GM12878 (cell line): ENCODE measurements at regions of chr3 and their contacts with region 1.

Region 1: DNA sequence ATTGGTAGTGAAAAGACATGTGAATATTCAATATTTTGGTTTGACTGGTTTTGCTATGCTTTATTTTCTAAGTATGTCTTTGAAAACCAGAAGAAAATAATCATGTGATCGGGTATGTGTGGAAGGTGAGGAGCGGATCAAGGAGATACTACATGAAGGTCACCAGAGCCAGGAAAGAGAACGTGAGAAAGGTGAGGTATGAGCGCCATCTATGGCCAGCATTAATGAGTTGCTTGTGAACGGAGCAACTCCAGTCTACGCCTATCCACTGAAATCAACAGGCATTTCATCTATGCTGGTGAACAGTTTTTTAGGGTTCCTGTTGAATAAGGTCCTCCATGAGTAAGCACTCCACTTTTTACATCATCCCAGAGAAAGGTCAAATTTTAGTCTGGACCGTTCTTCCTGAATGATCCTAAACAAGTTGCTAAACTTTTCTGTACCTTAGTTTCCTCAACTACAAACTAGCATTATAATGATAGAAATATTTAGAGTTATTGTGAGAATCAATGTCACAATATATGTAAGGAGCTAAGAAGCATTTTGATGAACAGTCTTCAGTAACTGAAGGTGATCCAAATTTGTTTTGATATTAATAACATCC is 1435.2 kb upstream of the CADM2 start:
- DNase-seq: peak; percentile 11
- ATAC-seq: peak; percentile 98
- H3K4me3 ChIP-seq: no peak overlapping the region
- H3K27ac ChIP-seq: no peak overlapping the region
- H3K4me1 ChIP-seq: no peaks in the 10 kb centered on the region
- H3K27me3 ChIP-seq: no peaks in the 10 kb centered on the region
- CTCF ChIP-seq: peak; percentile 56 to 78 (median 65)
- EP300 ChIP-seq: no peak
- POLR2A ChIP-seq: no peak
- RAD21 ChIP-seq: peak; percentile 79

Region 2: GRCh38 chr3:81581966-81582599 is 1941.5 kb before region 1 on chr3:
- CTCF ChIA-PET with region 1: no interaction called
- POLR2A ChIA-PET with region 1: no interaction called
- RAD21 ChIA-PET with region 1: no interaction called
- SMC1A ChIA-PET with region 1: no interaction called
- in situ Hi-C with region 1: no loop called
- intact Hi-C with region 1: loop called (anchors 5 kb)
- DNase-seq: peak; percentile 4
- ATAC-seq: peak; percentile 91
- H3K4me3 ChIP-seq: no peak overlapping the region
- H3K27ac ChIP-seq: no peak overlapping the region
- H3K4me1 ChIP-seq: no peaks in the 10 kb centered on the region
- H3K27me3 ChIP-seq: no peaks in the 10 kb centered on the region
- CTCF ChIP-seq: peak; percentile 67 to 76 (median 75)
- EP300 ChIP-seq: no peak
- POLR2A ChIP-seq: no peak
- RAD21 ChIP-seq: peak; percentile 77

Region 3: DNA sequence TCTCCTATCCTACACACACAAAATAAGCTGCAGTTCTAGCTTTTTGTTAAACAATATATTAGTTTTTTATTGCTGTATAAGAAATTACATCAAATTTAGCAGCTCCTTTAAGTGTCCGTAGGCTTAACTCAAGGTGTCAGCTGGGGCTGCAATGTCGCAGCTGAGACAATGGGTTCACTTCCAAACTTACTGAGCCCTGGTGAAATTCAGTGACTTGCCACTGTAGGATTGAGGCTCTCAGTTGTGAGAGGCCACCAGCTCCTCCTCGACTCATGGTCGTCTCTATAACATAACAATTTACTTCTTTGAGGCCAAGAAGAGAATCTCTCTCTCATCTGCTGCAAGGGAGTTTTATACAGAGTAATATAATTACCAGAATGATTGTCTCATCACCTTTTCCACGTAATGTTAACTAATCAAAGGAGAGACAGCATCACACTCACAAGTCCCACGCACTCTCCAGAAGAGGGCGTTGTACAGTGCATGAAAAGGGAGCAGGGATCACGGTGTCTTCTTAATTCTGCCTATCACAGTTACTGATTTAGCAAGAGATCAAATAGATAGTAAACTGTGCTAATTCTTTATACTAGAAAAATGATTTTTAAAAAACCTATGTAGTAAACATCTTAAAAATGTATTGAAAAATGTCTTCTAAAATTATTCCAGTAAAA is 1026.5 kb before region 1 on chr3:
- CTCF ChIA-PET with region 1: interaction called, 3 read pairs
- POLR2A ChIA-PET with region 1: no interaction called
- RAD21 ChIA-PET with region 1: no interaction called
- SMC1A ChIA-PET with region 1: no interaction called
- in situ Hi-C with region 1: no loop called
- intact Hi-C with region 1: loop called (anchors 10 kb)
- DNase-seq: no peak
- ATAC-seq: peak; percentile 63
- H3K4me3 ChIP-seq: no peak overlapping the region
- H3K27ac ChIP-seq: no peak overlapping the region
- H3K4me1 ChIP-seq: no peaks in the 10 kb centered on the region
- H3K27me3 ChIP-seq: no peaks in the 10 kb centered on the region
- CTCF ChIP-seq: peak; percentile 20 to 38 (median 36); a peak in 4 of 6 replicates
- EP300 ChIP-seq: no peak
- POLR2A ChIP-seq: no peak
- RAD21 ChIP-seq: peak; percentile 49

Region 4: DNA sequence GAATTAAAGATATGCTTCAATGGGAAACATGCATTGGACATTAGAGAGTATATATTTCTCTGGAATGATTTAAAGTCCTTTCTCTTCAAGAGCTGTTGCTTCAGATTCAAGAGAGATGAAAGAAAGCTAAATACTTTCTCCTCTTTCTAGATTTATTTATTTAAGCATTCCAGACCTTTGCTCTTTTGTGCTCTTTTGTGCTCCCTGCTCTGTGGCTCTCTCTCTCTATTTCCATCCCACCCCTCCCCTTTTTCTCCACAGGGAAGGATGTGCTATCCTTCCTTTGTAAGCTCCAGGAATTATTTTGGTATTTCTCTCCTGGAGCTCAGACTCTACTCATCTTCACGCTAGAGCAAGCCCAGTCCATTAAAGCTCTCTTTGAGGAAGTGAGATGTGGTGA is 890.3 kb before region 1 on chr3:
- CTCF ChIA-PET with region 1: no interaction called
- POLR2A ChIA-PET with region 1: no interaction called
- RAD21 ChIA-PET with region 1: no interaction called
- SMC1A ChIA-PET with region 1: no interaction called
- in situ Hi-C with region 1: no loop called
- intact Hi-C with region 1: loop called (anchors 10 kb)
- DNase-seq: no peak
- ATAC-seq: 0 out of 3 replicates have a peak, but pooled peaks have one; percentile 27
- H3K4me3 ChIP-seq: no peak overlapping the region
- H3K27ac ChIP-seq: no peak overlapping the region
- H3K4me1 ChIP-seq: no peaks in the 10 kb centered on the region
- H3K27me3 ChIP-seq: no peaks in the 10 kb centered on the region
- CTCF ChIP-seq: no peak
- EP300 ChIP-seq: no peak
- POLR2A ChIP-seq: no peak
- RAD21 ChIP-seq: no peak

Region 5: GRCh38 chr3:83302091-83302490 is 221.5 kb before region 1 on chr3:
- CTCF ChIA-PET with region 1: no interaction called
- POLR2A ChIA-PET with region 1: no interaction called
- RAD21 ChIA-PET with region 1: no interaction called
- SMC1A ChIA-PET with region 1: no interaction called
- in situ Hi-C with region 1: no loop called
- intact Hi-C with region 1: no loop called
- DNase-seq: no peak
- ATAC-seq: no peak
- H3K4me3 ChIP-seq: no peak overlapping the region
- H3K27ac ChIP-seq: no peak overlapping the region
- H3K4me1 ChIP-seq: no peaks in the 10 kb centered on the region
- H3K27me3 ChIP-seq: no peaks in the 10 kb centered on the region
- CTCF ChIP-seq: no peak
- EP300 ChIP-seq: no peak
- POLR2A ChIP-seq: no peak
- RAD21 ChIP-seq: no peak